BJ (cell line): ENCODE measurements at regions of chr5 and their contacts with region 1.

Region 1: DNA sequence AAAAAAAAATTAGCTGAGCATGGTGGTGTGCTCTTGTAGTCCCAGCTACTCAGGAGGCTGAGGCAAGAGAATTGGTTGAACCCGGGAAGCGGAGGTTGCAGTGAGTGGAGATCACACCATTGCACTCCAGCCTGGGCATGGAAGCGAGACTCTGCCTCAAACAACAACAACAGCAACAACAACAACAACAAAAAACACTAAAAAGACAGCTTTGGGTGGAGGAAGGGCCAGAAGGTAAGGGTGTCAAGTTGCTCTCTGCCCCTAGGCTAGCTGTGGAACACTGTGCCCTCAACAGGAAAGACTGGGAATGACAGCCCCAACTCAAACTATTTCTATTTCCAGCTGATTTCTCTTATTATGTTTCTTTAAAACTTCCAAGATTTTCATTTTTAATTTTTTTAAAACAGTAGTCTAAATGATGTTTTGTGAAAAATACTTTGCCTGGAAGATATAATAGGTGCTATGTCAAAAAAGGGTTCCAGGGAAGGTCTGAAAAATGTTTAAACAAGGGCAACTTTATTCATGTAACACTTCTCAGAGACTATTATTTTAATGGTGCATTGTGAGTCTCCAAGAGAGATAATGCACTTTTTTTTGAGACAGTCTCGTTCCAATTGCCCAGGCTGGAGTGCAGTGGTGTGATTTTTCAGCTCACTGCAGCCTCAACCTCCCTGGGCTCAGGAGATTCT is 29.9 kb downstream of the CLINT1 start:
- DNase-seq: no peak
- H3K4me3 ChIP-seq: no peak overlapping the region
- H3K27me3 ChIP-seq: no peaks in the 10 kb centered on the region
- CTCF ChIP-seq: peak; percentile 38

Region 2: GRCh38 chr5:157640406-157641066 is 188.6 kb before region 1 on chr5:
- CTCF ChIA-PET with region 1: no interaction called
- POLR2A ChIA-PET with region 1: no interaction called
- DNase-seq: no peak
- H3K4me3 ChIP-seq: no peak overlapping the region
- H3K27me3 ChIP-seq: no peaks in the 10 kb centered on the region
- CTCF ChIP-seq: no peak

Region 3: GRCh38 chr5:157816682-157817386 is 12.3 kb before region 1 on chr5:
- CTCF ChIA-PET with region 1: interaction called, 10 read pairs
- POLR2A ChIA-PET with region 1: no interaction called
- DNase-seq: no peak
- H3K4me3 ChIP-seq: no peak overlapping the region
- H3K27me3 ChIP-seq: no peaks in the 10 kb centered on the region
- CTCF ChIP-seq: peak; percentile 30; the same call in 1 of the 2 replicates

Region 4: GRCh38 chr5:157870837-157871834 is 42.0 kb after region 1 on chr5:
- CTCF ChIA-PET with region 1: no interaction called
- POLR2A ChIA-PET with region 1: interaction called, 11 read pairs
- DNase-seq: no peak
- H3K4me3 ChIP-seq: no peak overlapping the region
- H3K27me3 ChIP-seq: no peaks in the 10 kb centered on the region
- CTCF ChIP-seq: 0 out of 2 replicates have a peak, but pooled peaks have one; percentile 6

Region 5: DNA sequence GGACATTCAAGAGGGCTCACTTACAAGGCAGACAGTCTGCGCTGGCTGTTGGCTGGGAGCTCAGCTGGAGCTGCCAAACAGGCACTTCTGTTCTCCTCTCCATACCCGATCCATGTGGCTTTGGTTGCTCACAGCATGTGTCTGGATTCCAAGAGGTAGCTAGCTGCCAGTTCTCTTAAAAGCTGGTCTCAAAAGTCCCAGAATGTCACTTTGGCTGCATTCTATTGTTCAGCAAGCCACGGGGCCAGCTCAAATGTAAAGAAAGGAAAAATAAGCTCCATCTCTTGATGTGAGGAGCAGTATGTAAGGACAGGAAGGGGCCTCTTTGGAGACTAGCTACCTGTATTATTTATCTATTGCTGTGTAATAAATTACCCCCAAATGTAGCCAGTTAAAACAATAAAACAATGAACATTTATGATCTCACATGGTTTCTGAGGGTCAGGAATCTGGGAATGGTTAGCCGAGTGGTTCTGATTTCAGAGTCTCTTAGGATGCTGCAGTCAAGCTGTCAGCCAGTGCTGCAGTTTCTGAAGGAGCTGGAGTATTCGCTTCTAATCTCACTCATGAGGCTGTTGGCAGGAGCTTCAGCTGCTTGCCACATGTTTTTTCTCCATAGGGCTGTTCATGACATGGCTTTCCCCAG is 142.6 kb after region 1 on chr5:
- CTCF ChIA-PET with region 1: no interaction called
- POLR2A ChIA-PET with region 1: no interaction called
- DNase-seq: no peak
- H3K4me3 ChIP-seq: no peak overlapping the region
- H3K27me3 ChIP-seq: no peaks in the 10 kb centered on the region; the same call in 1 of the 2 replicates
- CTCF ChIP-seq: no peak